ENCODE measurements at regions of chr19 and their contacts with region 1.

Region 1: DNA sequence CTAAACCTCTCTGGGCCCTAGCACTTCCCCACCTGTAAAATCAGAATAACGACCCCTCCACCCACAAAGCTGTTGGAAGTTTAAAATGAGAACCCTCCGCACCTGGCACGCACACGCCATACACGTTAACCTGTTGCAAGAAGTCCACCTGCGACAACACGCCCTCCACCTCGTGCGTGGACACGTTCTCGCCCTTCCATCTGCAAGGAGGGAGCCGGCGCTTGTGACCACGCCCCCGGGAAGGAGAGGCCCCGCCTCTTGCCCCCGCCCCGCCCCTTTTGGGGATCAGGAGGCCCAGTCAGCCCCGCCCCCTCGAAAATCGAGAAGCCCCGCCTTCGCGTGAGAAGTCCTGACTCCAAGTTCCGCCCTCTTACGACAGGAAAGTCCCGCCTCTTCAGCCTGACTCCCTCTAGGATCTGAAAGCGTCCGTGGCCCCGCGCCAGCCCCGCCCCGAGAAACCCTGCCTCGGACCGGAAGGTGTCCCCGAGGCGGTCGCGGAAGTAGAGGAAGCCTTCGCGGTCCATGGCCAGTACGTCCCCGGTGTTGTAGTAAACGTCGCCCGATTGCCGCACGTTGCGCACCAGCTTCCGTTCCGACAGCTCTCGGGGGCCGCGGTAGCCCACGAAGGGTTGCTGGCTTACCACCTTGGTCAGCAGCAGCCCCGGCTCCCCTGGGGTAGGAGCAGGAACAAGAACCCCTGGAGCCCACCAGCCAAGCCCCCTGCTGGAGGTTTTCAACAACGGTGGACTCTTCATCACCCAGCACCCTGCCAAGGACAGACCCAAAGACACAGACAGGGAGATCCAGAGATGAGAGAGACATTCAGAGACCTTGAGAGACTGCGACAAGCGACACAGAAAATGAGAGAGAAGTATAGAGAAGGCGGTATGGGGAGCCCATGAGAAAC is 12.5 kb downstream of the SLC27A5 start:
- DNase-seq: peak; percentile 100
- ATAC-seq: peak; percentile 99
- H3K4me3 Mint-ChIP-seq: peak overlapping the region; percentile 81
- H3K27ac Mint-ChIP-seq: peak overlapping the region; percentile 95
- H3K4me1 Mint-ChIP-seq: peaks cover 19% of the 10 kb centered on the region
- H3K27me3 Mint-ChIP-seq: no peaks in the 10 kb centered on the region

Region 2: GRCh38 chr19:58305065-58305931 is 194.0 kb before region 1 on chr19 and contains the start of gene ERVK3-1:
- CTCF ChIA-PET with region 1: interaction called, 3 read pairs
- POLR2A ChIA-PET with region 1: interaction called, 3 read pairs
- intact Hi-C with region 1: loop called in 1 of 2 experiments (anchors 1 kb)
- DNase-seq: peak; percentile 97
- ATAC-seq: peak; percentile 98
- H3K4me3 Mint-ChIP-seq: peak within 1 kb of the TSS; percentile 99
- H3K27ac Mint-ChIP-seq: peak within 1 kb of the TSS; percentile 100
- H3K4me1 Mint-ChIP-seq: peaks cover 52% of the 10 kb centered on the region
- H3K27me3 Mint-ChIP-seq: no peaks in the 10 kb centered on the region
- total RNA-seq, gene ERVK3-1: 38.6 to 53.6 TPM

Region 3: GRCh38 chr19:58386576-58387337 is 112.5 kb before region 1 on chr19 and contains the start of gene RPS5:
- CTCF ChIA-PET with region 1: no interaction called
- POLR2A ChIA-PET with region 1: no interaction called
- intact Hi-C with region 1: loop called in 1 of 2 experiments (anchors 1 kb)
- DNase-seq: peak; percentile 97
- ATAC-seq: peak; percentile 96
- H3K4me3 Mint-ChIP-seq: peak within 1 kb of the TSS; percentile 96
- H3K27ac Mint-ChIP-seq: peak within 1 kb of the TSS; percentile 97
- H3K4me1 Mint-ChIP-seq: peaks cover 33% of the 10 kb centered on the region
- H3K27me3 Mint-ChIP-seq: no peaks in the 10 kb centered on the region
- total RNA-seq, gene RPS5: 1,234 to 1,535 TPM

Region 4: GRCh38 chr19:58451358-58452101 is 47.7 kb before region 1 on chr19 and contains the start of gene ZNF324B:
- CTCF ChIA-PET with region 1: no interaction called
- POLR2A ChIA-PET with region 1: no interaction called
- intact Hi-C with region 1: loop called in 1 of 2 experiments (anchors 1 kb)
- DNase-seq: peak; percentile 98
- ATAC-seq: peak; percentile 99
- H3K4me3 Mint-ChIP-seq: peak within 1 kb of the TSS; percentile 77
- H3K27ac Mint-ChIP-seq: peak within 1 kb of the TSS; percentile 55
- H3K4me1 Mint-ChIP-seq: peaks cover 25% of the 10 kb centered on the region
- H3K27me3 Mint-ChIP-seq: peaks cover 15% of the 10 kb centered on the region
- total RNA-seq, gene ZNF324B: 5.8 to 7.5 TPM

Region 5: GRCh38 chr19:58513694-58514563 is 14.7 kb after region 1 on chr19:
- CTCF ChIA-PET with region 1: interaction called, 8 read pairs
- POLR2A ChIA-PET with region 1: interaction called, 8 read pairs
- intact Hi-C with region 1: loop called (anchors 1 kb)
- DNase-seq: peak; percentile 99
- ATAC-seq: peak; percentile 88
- H3K4me3 Mint-ChIP-seq: peak overlapping the region; percentile 88
- H3K27ac Mint-ChIP-seq: peak overlapping the region; percentile 81
- H3K4me1 Mint-ChIP-seq: peaks cover 27% of the 10 kb centered on the region
- H3K27me3 Mint-ChIP-seq: no peaks in the 10 kb centered on the region

Region 6: GRCh38 chr19:58572818-58573657 is 73.8 kb after region 1 on chr19 and contains the start of gene MZF1:
- CTCF ChIA-PET with region 1: no interaction called
- POLR2A ChIA-PET with region 1: interaction called, 3 read pairs
- intact Hi-C with region 1: loop called in 1 of 2 experiments (anchors 1 kb)
- DNase-seq: peak; percentile 100
- ATAC-seq: peak; percentile 69
- H3K4me3 Mint-ChIP-seq: peak within 1 kb of the TSS; percentile 95
- H3K27ac Mint-ChIP-seq: peak within 1 kb of the TSS; percentile 100
- H3K4me1 Mint-ChIP-seq: peaks cover 38% of the 10 kb centered on the region
- H3K27me3 Mint-ChIP-seq: no peaks in the 10 kb centered on the region
- total RNA-seq, gene MZF1: 14.3 to 15.0 TPM